Activated CD8-positive, alpha-beta T cell treated with anti-CD3 and anti-CD28 coated beads, Interleukin-2, amount 10 ng/mL, durations not matched to agents 7 days and 5 days (primary cell): ENCODE measurements at regions of chr11 and their contacts with region 1.

Region 1: DNA sequence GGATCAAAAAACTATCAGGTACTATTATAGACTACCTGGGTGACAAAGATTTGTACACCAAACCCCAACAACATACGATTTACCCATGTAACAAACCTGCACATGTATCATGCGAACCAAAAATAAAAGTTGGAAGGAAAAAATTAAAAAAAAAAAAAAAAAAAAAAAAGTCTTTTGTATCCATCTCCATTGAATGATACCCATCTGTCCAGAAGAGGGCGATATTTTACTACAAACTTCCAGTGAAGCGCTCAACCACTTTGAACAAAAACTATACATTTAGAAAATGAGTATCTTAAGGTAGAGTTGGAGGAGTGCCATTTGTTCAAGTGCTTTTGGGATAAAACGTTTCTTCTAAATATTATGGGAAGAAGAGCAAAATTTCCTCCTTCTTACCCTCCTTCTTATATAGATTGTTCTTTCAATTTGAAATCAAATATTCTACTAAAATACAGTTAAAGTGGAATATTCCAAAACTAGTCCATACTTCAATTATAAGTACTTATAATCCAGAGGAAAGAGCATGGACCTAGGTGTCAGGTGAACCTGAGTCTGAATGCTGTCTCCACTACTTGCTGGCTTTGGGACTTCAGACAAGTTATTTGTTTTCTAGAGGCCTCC is 23.3 kb downstream of the ARL14EP start:
- DNase-seq: no peak
- ATAC-seq: no peak
- H3K4me3 Mint-ChIP-seq: no peak overlapping the region
- H3K27ac Mint-ChIP-seq: no peak overlapping the region
- H3K4me1 Mint-ChIP-seq: peaks cover 2% of the 10 kb centered on the region
- H3K27me3 Mint-ChIP-seq: no peaks in the 10 kb centered on the region

Region 2: GRCh38 chr11:30270671-30271070 is 75.5 kb before region 1 on chr11:
- CTCF ChIA-PET with region 1: no interaction called
- POLR2A ChIA-PET with region 1: no interaction called
- DNase-seq: no peak
- ATAC-seq: no peak
- H3K4me3 Mint-ChIP-seq: no peak overlapping the region
- H3K27ac Mint-ChIP-seq: no peak overlapping the region
- H3K4me1 Mint-ChIP-seq: no peaks in the 10 kb centered on the region
- H3K27me3 Mint-ChIP-seq: peaks cover 36% of the 10 kb centered on the region

Region 3: DNA sequence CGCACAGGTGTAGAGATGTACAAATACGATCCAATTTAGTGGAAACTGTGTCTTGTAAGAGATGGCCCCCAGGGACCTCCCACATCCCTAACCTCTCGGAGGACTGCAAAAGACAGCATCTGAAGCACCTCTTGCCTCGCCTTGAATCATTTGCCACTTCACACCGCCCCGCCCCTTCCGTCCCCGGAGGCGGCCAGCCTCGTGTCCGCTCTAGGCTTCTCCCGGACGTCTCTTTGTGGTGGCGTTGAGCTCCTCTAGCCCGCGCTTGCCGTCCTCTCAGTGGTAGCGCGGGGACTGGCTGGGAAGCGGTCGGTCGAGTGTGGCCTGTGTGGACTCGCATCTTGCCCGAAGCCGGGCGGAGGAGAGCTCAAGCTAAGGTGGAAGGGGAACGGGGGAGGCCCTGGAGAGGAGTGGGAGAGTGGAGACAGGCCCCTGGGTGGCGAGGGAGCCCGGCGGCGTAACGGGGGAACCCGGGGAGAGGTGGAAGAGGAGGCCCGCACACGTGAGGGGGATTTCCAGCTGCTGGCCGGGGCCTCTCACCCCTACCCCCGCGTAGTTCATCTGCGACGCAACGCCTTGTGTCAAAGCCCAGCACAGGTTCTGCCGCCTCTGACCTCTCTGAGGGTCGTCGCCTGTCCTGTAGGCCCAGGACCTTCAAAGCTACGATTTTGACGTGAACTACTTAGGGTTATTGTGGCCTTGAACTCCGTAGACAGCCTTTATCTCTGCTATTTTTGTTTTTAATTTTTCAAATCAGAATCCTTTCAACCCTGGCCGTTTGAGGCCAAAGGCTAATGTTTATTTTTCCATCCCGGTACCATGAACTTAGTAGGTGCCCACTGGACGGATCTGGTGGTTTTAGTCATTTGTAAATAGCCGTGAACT is 23.1 kb before region 1 on chr11 and contains the start of gene ARL14EP:
- CTCF ChIA-PET with region 1: interaction called, 14 read pairs
- POLR2A ChIA-PET with region 1: interaction called, 3 read pairs
- DNase-seq: peak; percentile 92
- ATAC-seq: peak; percentile 92
- H3K4me3 Mint-ChIP-seq: peak within 1 kb of the TSS; percentile 97
- H3K27ac Mint-ChIP-seq: peak within 1 kb of the TSS; percentile 98
- H3K4me1 Mint-ChIP-seq: peaks cover 46% of the 10 kb centered on the region
- H3K27me3 Mint-ChIP-seq: peaks cover 3% of the 10 kb centered on the region
- total RNA-seq, gene ARL14EP: 27.3 to 30.9 TPM